Ovary (tissue), 10 donors: ENCODE measurements at regions of chr1 and their contacts with region 1.

Region 1: GRCh38 chr1:48665708-48666407 is 110.8 kb downstream of the BEND5 start:
- DNase-seq: no peak
- H3K4me3 ChIP-seq: no peak overlapping the region
- H3K27ac ChIP-seq: no peak overlapping the region
- H3K4me1 ChIP-seq: no peaks in the 10 kb centered on the region
- H3K27me3 ChIP-seq: no peaks in the 10 kb centered on the region
- CTCF ChIP-seq: no peak
- EP300 ChIP-seq: no peak
- POLR2A ChIP-seq: no peak

Region 2: DNA sequence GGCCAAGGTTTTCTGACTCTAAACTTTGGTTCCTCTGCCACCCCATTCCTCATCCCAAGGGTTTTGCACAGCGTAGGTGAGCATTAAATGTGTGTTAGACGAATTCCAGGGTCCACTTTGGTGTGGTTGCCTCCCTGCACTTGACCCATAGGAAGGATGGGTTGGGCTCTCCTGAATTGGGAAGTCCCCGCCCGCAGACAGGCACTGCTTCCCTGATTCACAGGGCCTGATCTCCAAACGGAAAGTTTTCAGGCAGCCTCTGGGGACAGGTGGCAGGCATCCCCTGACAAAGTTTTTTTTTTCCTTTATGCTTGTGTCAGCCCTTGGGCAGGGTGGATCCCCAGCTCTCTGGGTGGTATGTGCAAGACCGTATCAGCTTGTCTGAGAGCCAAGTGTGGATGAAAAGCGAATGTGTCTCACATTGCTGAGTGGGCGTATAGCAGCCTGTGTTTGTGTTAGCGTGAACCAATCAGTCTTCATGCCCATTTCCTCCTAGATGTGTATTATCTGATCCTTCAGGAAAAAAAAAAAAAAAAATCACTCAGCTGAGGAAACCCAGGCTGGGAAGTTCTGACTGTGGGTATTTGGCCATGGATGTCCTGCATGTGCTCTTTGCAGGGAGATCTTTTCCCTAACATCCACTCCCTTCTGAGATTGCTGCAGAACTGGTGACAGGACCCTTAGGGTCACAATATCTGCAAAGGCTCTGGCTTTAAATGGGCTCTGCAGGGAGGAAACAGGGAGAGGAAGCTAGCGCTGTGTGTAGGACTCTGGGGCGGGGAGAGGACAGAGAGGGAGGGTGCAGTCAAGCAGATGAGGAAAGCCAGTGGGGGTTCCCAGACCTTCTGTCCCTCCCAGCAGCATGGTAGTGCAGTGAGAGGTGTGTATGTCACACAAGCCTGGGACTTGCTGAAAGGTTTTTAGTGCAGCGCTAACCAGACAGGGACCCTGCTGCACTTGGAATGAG is 626.5 kb before region 1 on chr1:
- intact Hi-C with region 1: loop called in 1 of 4 experiments (anchors 5 kb)
- DNase-seq: no peak
- H3K4me3 ChIP-seq: no peak overlapping the region
- H3K27ac ChIP-seq: no peak overlapping the region
- H3K4me1 ChIP-seq: peaks cover 4% of the 10 kb centered on the region
- H3K27me3 ChIP-seq: no peaks in the 10 kb centered on the region
- CTCF ChIP-seq: no peak
- EP300 ChIP-seq: no peak
- POLR2A ChIP-seq: no peak